ENCODE measurements at regions of chr9 and their contacts with region 1.

Region 1: DNA sequence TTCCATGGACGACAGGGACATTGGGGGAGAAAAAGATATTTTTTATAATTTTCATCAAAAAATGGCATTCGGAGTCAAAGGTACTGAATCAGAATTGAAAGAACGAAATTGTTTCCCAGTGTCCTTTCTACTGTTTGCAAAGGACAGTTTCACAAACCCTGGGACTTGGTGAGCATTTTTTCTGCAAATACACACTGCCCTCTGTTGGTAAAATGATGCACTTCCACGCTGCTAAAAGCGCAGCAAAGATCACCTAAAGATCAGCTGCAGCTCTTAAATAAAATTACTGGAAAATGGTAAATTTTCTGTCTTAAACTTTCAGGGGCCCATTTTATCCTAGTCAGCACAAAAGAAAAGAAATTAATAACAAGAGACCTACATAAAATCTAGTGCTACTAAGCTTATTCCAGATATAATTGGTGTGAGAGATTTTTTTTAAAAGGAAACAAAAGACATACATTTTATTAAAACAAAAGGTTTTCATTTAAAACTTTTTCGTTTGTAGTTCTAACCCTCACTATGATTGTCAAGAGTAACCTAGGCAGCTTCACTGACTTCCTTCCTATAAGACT is 566.0 kb downstream of the CAAP1 start:
- DNase-seq: peak in 1 of 3 donors; percentile 50
- ATAC-seq: peak; percentile 63
- H3K4me3 ChIP-seq: no peak overlapping the region
- H3K4me1 ChIP-seq: no peaks in the 10 kb centered on the region
- CTCF ChIP-seq: peak; percentile 50

Region 2: GRCh38 chr9:25964239-25964638 is 362.3 kb before region 1 on chr9:
- intact Hi-C with region 1: loop called in 1 of 2 experiments (anchors 10 kb)
- DNase-seq: peak in 1 of 3 donors; percentile 13
- ATAC-seq: no peak
- H3K4me3 ChIP-seq: no peak overlapping the region
- H3K4me1 ChIP-seq: no peaks in the 10 kb centered on the region
- CTCF ChIP-seq: no peak